Heart right ventricle (tissue), 16 donors: ENCODE measurements at regions of chr6 and their contacts with region 1.

Region 1: DNA sequence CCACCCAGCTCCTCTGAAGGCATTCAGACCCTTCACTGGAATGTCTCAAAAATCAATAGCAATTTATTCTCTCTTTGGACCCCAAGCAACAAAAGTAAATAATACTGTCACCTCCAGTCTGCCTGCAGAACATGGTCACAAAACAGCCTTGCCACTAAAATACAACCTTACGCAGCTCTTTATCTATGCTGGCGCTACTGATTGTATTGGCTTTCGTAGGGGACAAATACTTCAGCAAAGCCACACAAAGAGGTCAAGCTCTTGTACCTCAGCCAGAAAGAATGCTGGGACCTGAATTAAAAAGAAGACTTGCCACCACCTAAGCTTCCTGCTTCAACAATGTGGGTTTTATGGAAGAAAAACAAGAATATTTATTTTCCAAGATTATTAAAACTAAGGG is 57.2 kb downstream of the PRKN start:
- DNase-seq: peak in 1 of 2 donors; percentile 36
- ATAC-seq: peak; percentile 71 to 94 (median 86)
- H3K4me3 ChIP-seq: peak overlapping the region in 1 of 10 donors; percentile 27
- H3K27ac ChIP-seq: peak overlapping the region in 9 of 10 donors; percentile 7 to 84 (median 76)
- H3K4me1 ChIP-seq: peaks cover 0 to 12% (median 0%) of the 10 kb centered on the region in 9 donors
- H3K27me3 ChIP-seq: no peaks in the 10 kb centered on the region
- CTCF ChIP-seq: no peak

Region 2: GRCh38 chr6:161522276-161522675 is 1148.1 kb before region 1 on chr6:
- intact Hi-C with region 1: no loop called
- DNase-seq: no peak
- ATAC-seq: no peak
- H3K4me3 ChIP-seq: no peak overlapping the region
- H3K27ac ChIP-seq: no peak overlapping the region
- H3K4me1 ChIP-seq: no peaks in the 10 kb centered on the region
- H3K27me3 ChIP-seq: no peaks in the 10 kb centered on the region
- CTCF ChIP-seq: no peak

Region 3: GRCh38 chr6:162416831-162417537 is 253.4 kb before region 1 on chr6:
- intact Hi-C with region 1: no loop called
- DNase-seq: no peak
- ATAC-seq: no peak
- H3K4me3 ChIP-seq: no peak overlapping the region
- H3K27ac ChIP-seq: no peak overlapping the region
- H3K4me1 ChIP-seq: no peaks in the 10 kb centered on the region
- H3K27me3 ChIP-seq: no peaks in the 10 kb centered on the region
- CTCF ChIP-seq: peak in 1 of 9 donors; percentile 5

Region 4: GRCh38 chr6:162621246-162621645 is 49.1 kb before region 1 on chr6:
- intact Hi-C with region 1: no loop called
- DNase-seq: no peak
- ATAC-seq: peak in 6 of 8 donors; percentile 20 to 78 (median 46)
- H3K4me3 ChIP-seq: no peak overlapping the region
- H3K27ac ChIP-seq: no peak overlapping the region
- H3K4me1 ChIP-seq: peaks cover 0 to 19% (median 4%) of the 10 kb centered on the region in 9 donors
- H3K27me3 ChIP-seq: no peaks in the 10 kb centered on the region
- CTCF ChIP-seq: no peak

Region 5: GRCh38 chr6:162715601-162716000 is 45.3 kb after region 1 on chr6:
- intact Hi-C with region 1: loop called in 2 of 10 experiments (anchors 5 kb)
- DNase-seq: no peak
- ATAC-seq: no peak
- H3K4me3 ChIP-seq: no peak overlapping the region
- H3K27ac ChIP-seq: no peak overlapping the region
- H3K4me1 ChIP-seq: peaks cover 0 to 9% (median 0%) of the 10 kb centered on the region in 9 donors
- H3K27me3 ChIP-seq: no peaks in the 10 kb centered on the region
- CTCF ChIP-seq: no peak

Region 6: GRCh38 chr6:162721404-162721687 is 51.0 kb after region 1 on chr6:
- intact Hi-C with region 1: loop called in 3 of 10 experiments (anchors 5 kb)
- DNase-seq: no peak
- ATAC-seq: peak in 5 of 8 donors; percentile 29 to 68 (median 52)
- H3K4me3 ChIP-seq: no peak overlapping the region
- H3K27ac ChIP-seq: peak overlapping the region; percentile 29 to 87 (median 76)
- H3K4me1 ChIP-seq: peaks cover 0 to 31% (median 15%) of the 10 kb centered on the region in 9 donors
- H3K27me3 ChIP-seq: no peaks in the 10 kb centered on the region
- CTCF ChIP-seq: no peak